GM12878 (cell line): ENCODE measurements at regions of chr9 and their contacts with region 1.

Region 1: GRCh38 chr9:86202338-86202882 is 57.0 kb downstream of the C9orf153 start:
- DNase-seq: peak; percentile 20
- ATAC-seq: peak; percentile 94
- H3K4me3 ChIP-seq: no peak overlapping the region
- H3K27ac ChIP-seq: no peak overlapping the region
- H3K4me1 ChIP-seq: no peaks in the 10 kb centered on the region; the same call in 1 of the 2 replicates
- H3K27me3 ChIP-seq: no peaks in the 10 kb centered on the region
- CTCF ChIP-seq: peak; percentile 78 to 84 (median 80)
- EP300 ChIP-seq: no peak
- POLR2A ChIP-seq: no peak
- RAD21 ChIP-seq: peak; percentile 77

Region 2: DNA sequence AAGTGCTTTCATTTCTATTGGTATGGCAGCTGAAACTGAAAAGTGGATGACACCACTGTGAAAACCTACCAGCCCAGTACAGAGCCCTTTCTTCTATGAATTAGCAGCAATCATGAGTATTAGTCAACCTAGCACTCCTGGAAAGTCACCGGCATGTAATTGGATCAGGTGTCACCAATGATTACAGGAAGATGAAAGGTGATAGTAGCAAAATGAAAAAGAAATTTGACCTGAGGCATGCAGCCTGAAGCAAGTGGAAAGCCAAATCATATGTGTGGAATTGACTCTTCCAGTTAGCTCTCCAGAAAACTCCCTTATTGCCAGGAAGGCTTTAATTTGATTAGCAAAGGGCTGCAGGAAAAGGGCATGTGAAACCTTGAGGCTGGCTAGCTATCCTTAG is 342.6 kb before region 1 on chr9:
- CTCF ChIA-PET with region 1: no interaction called
- POLR2A ChIA-PET with region 1: no interaction called
- RAD21 ChIA-PET with region 1: no interaction called
- SMC1A ChIA-PET with region 1: no interaction called
- in situ Hi-C with region 1: no loop called
- intact Hi-C with region 1: no loop called
- DNase-seq: no peak
- ATAC-seq: peak; percentile 49; the same call in 2 of the 3 replicates
- H3K4me3 ChIP-seq: no peak overlapping the region
- H3K27ac ChIP-seq: no peak overlapping the region
- H3K4me1 ChIP-seq: no peaks in the 10 kb centered on the region
- H3K27me3 ChIP-seq: no peaks in the 10 kb centered on the region
- CTCF ChIP-seq: no peak
- EP300 ChIP-seq: no peak
- POLR2A ChIP-seq: no peak
- RAD21 ChIP-seq: no peak

Region 3: GRCh38 chr9:86187121-86187520 is 15.3 kb before region 1 on chr9:
- CTCF ChIA-PET with region 1: interaction called, 10 read pairs
- POLR2A ChIA-PET with region 1: no interaction called
- RAD21 ChIA-PET with region 1: no interaction called
- SMC1A ChIA-PET with region 1: interaction called, 3 read pairs
- in situ Hi-C with region 1: no loop called
- intact Hi-C with region 1: no loop called
- DNase-seq: no peak
- ATAC-seq: no peak
- H3K4me3 ChIP-seq: no peak overlapping the region
- H3K27ac ChIP-seq: no peak overlapping the region
- H3K4me1 ChIP-seq: no peaks in the 10 kb centered on the region
- H3K27me3 ChIP-seq: no peaks in the 10 kb centered on the region
- CTCF ChIP-seq: no peak
- EP300 ChIP-seq: no peak
- POLR2A ChIP-seq: no peak
- RAD21 ChIP-seq: no peak

Region 4: GRCh38 chr9:86238861-86239770 is 36.7 kb after region 1 on chr9:
- CTCF ChIA-PET with region 1: interaction called, 24 read pairs
- POLR2A ChIA-PET with region 1: no interaction called
- RAD21 ChIA-PET with region 1: interaction called, 6 read pairs
- SMC1A ChIA-PET with region 1: interaction called, 13 read pairs
- in situ Hi-C with region 1: no loop called
- intact Hi-C with region 1: no loop called
- DNase-seq: no peak
- ATAC-seq: peak; percentile 52; the same call in 2 of the 3 replicates
- H3K4me3 ChIP-seq: no peak overlapping the region
- H3K27ac ChIP-seq: no peak overlapping the region
- H3K4me1 ChIP-seq: no peaks in the 10 kb centered on the region
- H3K27me3 ChIP-seq: no peaks in the 10 kb centered on the region
- CTCF ChIP-seq: no peak
- EP300 ChIP-seq: no peak
- POLR2A ChIP-seq: no peak
- RAD21 ChIP-seq: no peak

Region 5: GRCh38 chr9:86246752-86247161 is 44.3 kb after region 1 on chr9:
- CTCF ChIA-PET with region 1: interaction called, 49 read pairs
- POLR2A ChIA-PET with region 1: no interaction called
- RAD21 ChIA-PET with region 1: interaction called, 31 read pairs
- SMC1A ChIA-PET with region 1: interaction called, 35 read pairs
- in situ Hi-C with region 1: no loop called
- intact Hi-C with region 1: loop called (anchors 2 kb)
- DNase-seq: peak; percentile 80
- ATAC-seq: peak; percentile 98
- H3K4me3 ChIP-seq: peak overlapping the region; percentile 15; the same call in 1 of the 2 replicates
- H3K27ac ChIP-seq: no peak overlapping the region
- H3K4me1 ChIP-seq: no peaks in the 10 kb centered on the region
- H3K27me3 ChIP-seq: no peaks in the 10 kb centered on the region
- CTCF ChIP-seq: peak; percentile 31 to 74 (median 43); a peak in 3 of 6 replicates
- EP300 ChIP-seq: 0 out of 4 replicates have a peak, but pooled peaks of 1 of the 2 experiments have one; percentile 21
- POLR2A ChIP-seq: no peak
- RAD21 ChIP-seq: peak; percentile 66

Region 6: DNA sequence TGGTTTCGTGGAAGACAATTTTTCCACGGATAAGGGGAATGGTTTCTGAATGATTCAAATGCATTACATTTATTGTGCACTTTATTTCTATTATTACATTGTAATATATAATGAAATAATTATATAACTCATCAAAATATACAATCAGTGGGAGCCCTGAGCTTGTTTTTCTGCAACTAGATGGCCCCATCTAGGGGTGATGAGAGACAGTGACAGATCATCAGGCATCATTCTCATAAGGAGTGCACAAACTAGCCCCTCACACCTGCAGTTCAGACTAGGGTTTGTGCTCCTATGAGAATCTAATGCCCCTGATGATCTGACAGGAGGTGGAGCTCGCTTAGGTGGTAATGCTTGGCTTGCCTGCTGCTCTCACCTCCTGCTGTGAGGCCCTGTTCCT is 73.6 kb after region 1 on chr9:
- CTCF ChIA-PET with region 1: interaction called, 19 read pairs
- POLR2A ChIA-PET with region 1: no interaction called
- RAD21 ChIA-PET with region 1: interaction called, 13 read pairs
- SMC1A ChIA-PET with region 1: interaction called, 29 read pairs
- in situ Hi-C with region 1: no loop called
- intact Hi-C with region 1: loop called (anchors 5 kb)
- DNase-seq: no peak
- ATAC-seq: peak; percentile 53
- H3K4me3 ChIP-seq: no peak overlapping the region
- H3K27ac ChIP-seq: no peak overlapping the region
- H3K4me1 ChIP-seq: no peaks in the 10 kb centered on the region
- H3K27me3 ChIP-seq: no peaks in the 10 kb centered on the region
- CTCF ChIP-seq: peak; percentile 21 to 34 (median 31); a peak in 4 of 6 replicates
- EP300 ChIP-seq: no peak
- POLR2A ChIP-seq: no peak
- RAD21 ChIP-seq: peak; percentile 42

Region 7: DNA sequence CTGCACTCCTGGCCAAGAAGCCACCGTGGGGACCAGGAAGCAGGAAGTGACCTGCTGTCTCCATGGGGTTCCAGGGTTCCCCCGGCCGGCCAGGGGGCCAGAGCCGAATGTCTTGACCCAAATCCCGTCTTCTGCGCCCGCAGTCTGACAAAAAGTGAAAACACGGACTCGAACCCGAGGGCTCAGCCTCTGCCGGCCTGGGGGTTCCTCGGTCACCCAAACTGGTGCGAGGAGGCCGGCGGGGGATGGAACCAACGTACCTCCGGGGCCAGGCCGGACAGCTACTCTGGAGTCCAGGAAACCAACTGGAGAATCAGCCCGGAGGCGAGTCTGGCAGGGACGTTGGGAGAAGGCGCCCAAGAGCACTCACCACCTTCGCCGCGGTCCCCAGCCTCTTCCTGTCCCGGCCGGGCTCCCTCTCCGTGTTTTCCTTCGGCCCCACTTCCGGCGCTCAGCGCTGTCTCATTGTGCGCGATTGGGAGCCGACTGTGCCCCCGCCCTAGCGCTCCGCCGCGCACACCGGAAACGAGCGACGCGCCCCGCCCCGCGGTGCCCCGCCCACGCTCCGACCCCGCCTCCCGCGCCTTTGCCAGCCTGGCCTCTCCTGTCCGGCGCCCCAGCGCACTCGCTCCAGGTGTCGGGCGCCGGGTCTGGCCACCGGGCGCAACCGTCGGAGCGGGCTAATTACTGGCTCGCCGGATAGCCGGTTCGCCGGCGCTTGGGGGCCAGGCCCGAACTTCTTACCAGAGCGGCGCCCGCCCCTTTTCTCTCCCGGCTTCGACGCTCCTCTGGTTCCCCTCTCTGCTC is 151.8 kb after region 1 on chr9 and contains the start of gene TUT7:
- CTCF ChIA-PET with region 1: no interaction called
- POLR2A ChIA-PET with region 1: no interaction called
- RAD21 ChIA-PET with region 1: interaction called, 3 read pairs
- SMC1A ChIA-PET with region 1: no interaction called
- in situ Hi-C with region 1: no loop called
- intact Hi-C with region 1: loop called (anchors 5 kb)
- DNase-seq: peak; percentile 65
- ATAC-seq: peak; percentile 83
- H3K4me3 ChIP-seq: peak within 1 kb of the TSS; percentile 99
- H3K27ac ChIP-seq: peak within 1 kb of the TSS; percentile 94
- H3K4me1 ChIP-seq: no peaks in the 10 kb centered on the region; the same call in 1 of the 2 replicates
- H3K27me3 ChIP-seq: no peaks in the 10 kb centered on the region
- CTCF ChIP-seq: no peak
- EP300 ChIP-seq: no peak
- POLR2A ChIP-seq: peak; percentile 88
- RAD21 ChIP-seq: no peak
- polyA plus RNA-seq, gene TUT7: 10.0 to 10.3 TPM

Region 8: DNA sequence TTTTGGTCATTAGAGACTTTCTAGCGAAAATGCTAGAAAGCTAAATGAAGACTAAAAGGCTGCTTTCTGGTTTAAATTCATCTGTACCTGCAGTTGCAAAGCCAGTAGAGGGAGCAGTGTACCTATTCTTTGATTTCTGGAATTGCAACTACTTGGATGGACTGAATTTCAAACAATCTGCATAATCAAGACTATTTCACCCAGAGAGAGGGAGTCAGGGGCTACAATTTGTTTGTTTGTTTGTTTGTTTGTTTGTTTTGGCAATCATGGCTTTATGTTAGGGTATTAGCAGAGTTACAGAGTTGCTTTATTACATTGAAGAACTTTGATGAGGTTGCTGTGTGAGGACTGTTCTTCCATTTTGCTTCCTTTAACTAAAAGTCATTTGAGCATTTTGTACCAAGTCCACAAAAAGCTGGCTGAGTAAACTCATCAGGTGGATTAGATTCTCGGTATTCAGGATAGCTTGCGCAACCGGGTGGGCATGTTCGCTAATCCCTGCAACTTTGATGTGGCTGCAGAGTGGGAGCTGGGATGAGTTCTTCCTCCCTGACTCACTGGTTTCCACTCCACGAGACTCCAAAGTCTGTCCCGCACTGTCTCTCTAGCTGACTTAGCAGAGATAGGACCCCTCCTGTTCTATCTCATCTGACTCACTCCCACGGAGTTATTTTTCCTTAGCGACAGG is 231.8 kb after region 1 on chr9:
- CTCF ChIA-PET with region 1: interaction called, 5 read pairs
- POLR2A ChIA-PET with region 1: no interaction called
- RAD21 ChIA-PET with region 1: interaction called, 4 read pairs
- SMC1A ChIA-PET with region 1: interaction called, 13 read pairs
- in situ Hi-C with region 1: no loop called
- intact Hi-C with region 1: no loop called
- DNase-seq: no peak
- ATAC-seq: peak; percentile 58; the same call in 2 of the 3 replicates
- H3K4me3 ChIP-seq: no peak overlapping the region
- H3K27ac ChIP-seq: no peak overlapping the region
- H3K4me1 ChIP-seq: no peaks in the 10 kb centered on the region
- H3K27me3 ChIP-seq: no peaks in the 10 kb centered on the region
- CTCF ChIP-seq: peak; percentile 57 to 79 (median 68)
- EP300 ChIP-seq: no peak
- POLR2A ChIP-seq: no peak
- RAD21 ChIP-seq: peak; percentile 81